GM10248 (cell line): ENCODE measurements at regions of chr3 and their contacts with region 1.

Region 1: DNA sequence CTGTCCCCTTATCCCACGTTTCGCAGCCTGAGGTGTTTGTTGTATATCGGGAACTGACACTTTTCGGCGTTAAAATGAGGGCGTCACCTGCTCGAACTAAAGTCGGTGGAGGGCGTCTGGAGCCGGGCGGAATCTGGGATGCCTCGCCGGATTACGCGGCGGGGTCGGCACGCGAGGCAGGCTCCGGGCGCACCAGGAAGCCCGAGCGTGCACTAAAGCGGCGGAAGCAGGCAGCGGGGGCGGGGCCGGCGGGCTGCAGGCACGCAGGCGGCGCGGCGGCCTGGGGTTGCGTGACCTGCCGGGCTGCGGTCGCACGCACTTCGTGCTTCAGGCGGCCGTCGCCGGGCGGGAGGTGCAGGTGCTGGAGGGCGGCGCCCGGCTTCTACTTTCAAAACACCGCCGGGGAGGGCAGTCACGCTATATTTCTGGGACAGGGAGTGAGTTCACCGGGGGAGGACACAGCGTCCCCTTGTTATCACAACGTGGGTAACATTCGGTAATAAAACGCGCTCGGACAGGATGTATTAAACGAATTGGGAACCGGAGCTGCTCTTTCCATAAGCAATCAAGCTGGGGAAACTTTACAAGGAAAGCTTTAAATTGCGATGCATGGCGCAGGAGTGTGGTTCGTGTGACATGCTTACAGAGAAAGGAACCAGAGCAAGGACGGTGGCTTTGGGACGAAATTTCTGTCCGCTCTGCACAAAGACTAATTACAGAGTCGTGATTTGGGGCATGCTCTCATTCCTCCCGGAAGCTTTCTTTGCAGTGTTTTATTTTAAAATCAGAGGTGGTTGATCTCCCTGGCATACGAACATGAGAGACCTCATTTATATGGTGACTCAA is 9.1 kb upstream of the LEKR1 start:
- DNase-seq: peak; percentile 82
- CTCF ChIP-seq: peak; percentile 11

Region 2: GRCh38 chr3:156554842-156555687 is 262.0 kb before region 1 on chr3 and contains the start of gene SSR3:
- CTCF ChIA-PET with region 1: no interaction called
- POLR2A ChIA-PET with region 1: no interaction called
- DNase-seq: peak; percentile 95
- CTCF ChIP-seq: no peak

Region 3: DNA sequence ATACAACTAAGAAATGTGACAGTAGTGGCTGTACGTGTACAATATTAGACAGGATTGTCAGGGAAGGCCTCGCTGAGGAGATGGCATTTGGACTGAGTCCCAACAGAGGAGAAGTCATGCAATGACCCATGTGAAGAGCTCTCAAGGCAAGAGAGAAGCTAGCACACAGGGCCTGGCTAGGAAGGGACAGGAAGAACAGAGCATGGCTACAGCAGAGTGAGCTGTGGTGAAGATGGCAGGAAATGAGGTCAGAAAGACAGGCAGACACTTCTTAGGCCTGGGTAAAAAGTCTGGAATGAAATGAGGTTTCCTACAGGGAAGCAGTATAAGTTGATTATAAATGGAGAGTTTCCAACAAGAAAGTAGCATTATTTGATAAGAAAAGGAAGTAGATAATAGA is 24.1 kb before region 1 on chr3:
- CTCF ChIA-PET with region 1: interaction called, 10 read pairs
- POLR2A ChIA-PET with region 1: no interaction called
- DNase-seq: no peak
- CTCF ChIP-seq: no peak

Region 4: DNA sequence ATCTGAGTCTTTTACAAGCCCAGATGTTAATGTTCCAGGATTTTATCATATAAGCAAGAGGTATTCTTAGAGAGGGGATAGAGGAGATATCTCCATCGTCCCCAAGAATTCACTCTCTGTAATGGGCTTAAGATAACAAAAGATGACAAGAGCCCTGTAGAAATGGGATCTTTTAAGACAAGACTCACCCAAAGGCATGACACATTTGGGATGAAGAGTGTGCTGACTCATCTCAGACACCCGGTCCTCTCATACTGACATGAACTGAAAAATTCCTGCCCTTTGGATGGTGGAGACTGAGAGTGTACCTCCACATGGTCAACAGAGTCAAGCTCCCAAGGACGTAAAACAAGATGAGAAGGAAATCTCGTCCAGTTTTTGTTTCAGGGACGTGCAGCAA is 20.1 kb after region 1 on chr3:
- CTCF ChIA-PET with region 1: no interaction called
- POLR2A ChIA-PET with region 1: no interaction called
- DNase-seq: no peak
- CTCF ChIP-seq: no peak

Region 5: GRCh38 chr3:157088601-157089454 is 271.8 kb after region 1 on chr3:
- CTCF ChIA-PET with region 1: interaction called, 13 read pairs
- POLR2A ChIA-PET with region 1: interaction called, 11 read pairs
- DNase-seq: peak; percentile 97
- CTCF ChIP-seq: peak; percentile 4